H1 (cell line): ENCODE measurements at regions of chr7 and their contacts with region 1.

Region 1: DNA sequence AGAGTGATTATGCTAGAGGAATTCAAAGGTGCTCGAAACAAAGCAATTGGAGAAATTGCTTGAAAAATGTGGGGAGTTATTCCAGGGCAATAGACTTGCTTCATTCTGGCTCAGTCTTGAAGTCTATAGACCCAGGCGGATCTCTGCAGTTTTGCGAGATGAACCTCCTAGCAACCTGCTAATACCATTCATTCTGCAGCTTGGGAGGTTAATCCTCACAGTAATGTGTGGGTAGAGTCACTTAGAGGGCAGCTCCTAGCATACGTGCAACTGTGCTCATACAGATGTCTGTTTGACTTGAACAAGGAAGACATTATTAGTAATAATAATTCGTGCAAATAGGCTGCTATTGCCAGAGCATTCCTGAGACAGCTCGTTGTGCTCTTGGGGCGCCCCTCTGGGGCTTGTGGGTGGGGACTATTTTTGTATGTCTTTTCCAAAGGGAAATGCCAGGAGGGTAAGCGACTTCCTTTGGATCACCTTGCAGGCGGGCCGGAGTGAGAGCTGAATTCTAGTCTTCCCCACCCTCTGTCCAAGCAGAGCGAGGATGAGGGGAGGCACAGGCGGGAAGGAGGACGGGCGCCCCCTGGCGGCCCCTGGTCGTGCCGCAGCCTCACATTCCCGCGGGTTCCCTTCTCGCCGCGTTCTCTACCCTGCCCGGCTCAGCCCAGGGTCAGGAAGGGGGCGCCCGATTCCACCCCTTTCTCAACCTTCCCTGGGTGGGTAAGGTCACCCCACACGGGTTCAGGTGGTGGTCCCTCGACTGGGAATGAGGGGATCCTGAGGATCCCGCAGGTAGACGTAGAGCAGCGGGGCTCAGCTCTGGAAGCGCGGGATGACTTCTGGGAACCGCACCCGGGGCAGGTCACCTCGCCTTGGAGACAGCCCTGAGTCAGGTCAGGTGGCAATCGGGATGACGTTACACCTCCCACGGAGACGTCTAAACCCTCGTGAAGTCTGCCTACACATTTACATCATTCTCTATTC is 241.5 kb downstream of the PHTF2 start:
- DNase-seq: peak; percentile 51 to 95
- H3K4me3 ChIP-seq: no peak overlapping the region
- H3K27ac ChIP-seq: no peak overlapping the region
- H3K4me1 ChIP-seq: peaks cover 3 to 20% (median 13%) of the 10 kb centered on the region in 4 experiments; a peak in 5 of 7 replicates
- H3K27me3 ChIP-seq: no peaks in the 10 kb centered on the region
- CTCF ChIP-seq: peak; percentile 82 to 95 (median 95)
- EP300 ChIP-seq: no peak
- POLR2A ChIP-seq: no peak
- RAD21 ChIP-seq: peak; percentile 78 to 79

Region 2: DNA sequence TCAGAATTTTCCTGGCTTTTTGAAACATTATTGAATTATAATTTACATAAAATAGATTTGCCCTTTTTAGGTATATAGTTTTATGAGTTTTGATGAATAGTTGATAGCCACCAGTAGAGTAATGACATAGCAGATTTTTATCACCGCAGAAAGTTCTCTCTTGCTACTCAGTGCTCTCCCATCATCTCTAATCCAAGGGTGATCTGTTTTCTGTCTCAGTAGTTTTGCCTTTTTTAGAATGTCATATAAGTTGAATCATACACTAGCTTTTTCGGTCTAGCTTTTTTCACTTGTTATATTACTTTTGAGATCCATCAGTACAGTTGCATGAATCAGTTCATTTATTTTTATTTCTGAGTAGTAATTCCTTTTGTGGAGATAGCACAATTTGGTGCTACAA is 325.9 kb before region 1 on chr7:
- CTCF ChIA-PET with region 1: no interaction called
- POLR2A ChIA-PET with region 1: no interaction called
- DNase-seq: no peak
- H3K4me3 ChIP-seq: no peak overlapping the region
- H3K27ac ChIP-seq: no peak overlapping the region
- H3K4me1 ChIP-seq: no peaks in the 10 kb centered on the region
- H3K27me3 ChIP-seq: no peaks in the 10 kb centered on the region
- CTCF ChIP-seq: no peak
- EP300 ChIP-seq: no peak
- POLR2A ChIP-seq: no peak
- RAD21 ChIP-seq: no peak

Region 3: DNA sequence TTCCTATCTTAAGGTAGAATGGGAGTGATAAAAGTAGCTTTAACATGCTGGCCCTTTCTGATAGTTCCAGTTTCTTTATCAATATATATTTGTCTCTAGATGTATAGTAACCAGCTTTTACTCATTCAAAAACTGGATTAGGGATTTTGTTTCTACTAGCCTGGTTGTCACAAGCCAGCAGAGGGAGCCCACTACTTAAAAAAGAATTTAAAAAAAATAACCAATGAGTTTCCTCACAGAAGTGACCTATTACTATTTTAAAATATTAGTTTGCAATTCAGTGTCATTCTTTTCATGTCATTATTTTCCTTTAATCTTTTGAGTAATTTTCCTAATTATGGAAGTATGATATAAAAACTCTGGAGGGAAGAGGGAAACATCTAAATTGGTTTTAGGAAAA is 99.4 kb before region 1 on chr7:
- CTCF ChIA-PET with region 1: interaction called, 14 read pairs
- POLR2A ChIA-PET with region 1: no interaction called
- DNase-seq: no peak
- H3K4me3 ChIP-seq: no peak overlapping the region
- H3K27ac ChIP-seq: no peak overlapping the region
- H3K4me1 ChIP-seq: no peaks in the 10 kb centered on the region
- H3K27me3 ChIP-seq: no peaks in the 10 kb centered on the region
- CTCF ChIP-seq: peak in 1 of 3 experiments; percentile 43; a peak in 1 of 4 replicates
- EP300 ChIP-seq: no peak
- POLR2A ChIP-seq: no peak
- RAD21 ChIP-seq: peak; percentile 73 to 75

Region 4: DNA sequence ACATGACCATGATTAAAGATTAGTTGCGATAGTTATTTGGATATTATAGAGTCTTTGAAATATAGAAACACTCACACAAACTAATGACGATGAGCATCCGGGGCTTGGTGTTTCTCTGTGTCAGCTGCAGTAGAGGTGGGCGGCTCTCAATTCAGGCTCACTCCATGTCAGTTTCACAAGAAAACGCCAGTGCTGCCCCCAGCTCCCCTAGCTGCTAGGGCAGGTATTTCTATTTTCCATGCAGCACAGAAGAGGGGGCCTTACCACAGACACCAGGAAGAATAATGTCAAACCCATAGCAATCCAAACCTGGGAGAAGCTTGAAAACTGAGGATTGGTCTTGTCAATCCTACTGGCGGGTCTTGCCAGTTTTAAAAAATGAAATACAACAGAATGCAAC is 44.4 kb before region 1 on chr7:
- CTCF ChIA-PET with region 1: interaction called, 39 read pairs
- POLR2A ChIA-PET with region 1: no interaction called
- DNase-seq: no peak
- H3K4me3 ChIP-seq: no peak overlapping the region
- H3K27ac ChIP-seq: no peak overlapping the region
- H3K4me1 ChIP-seq: peaks cover 0 to 3% (median 1%) of the 10 kb centered on the region in 4 experiments; a peak in 2 of 7 replicates
- H3K27me3 ChIP-seq: no peaks in the 10 kb centered on the region
- CTCF ChIP-seq: peak; percentile 58 to 78 (median 77)
- EP300 ChIP-seq: no peak
- POLR2A ChIP-seq: no peak
- RAD21 ChIP-seq: peak; percentile 49 to 62

Region 5: DNA sequence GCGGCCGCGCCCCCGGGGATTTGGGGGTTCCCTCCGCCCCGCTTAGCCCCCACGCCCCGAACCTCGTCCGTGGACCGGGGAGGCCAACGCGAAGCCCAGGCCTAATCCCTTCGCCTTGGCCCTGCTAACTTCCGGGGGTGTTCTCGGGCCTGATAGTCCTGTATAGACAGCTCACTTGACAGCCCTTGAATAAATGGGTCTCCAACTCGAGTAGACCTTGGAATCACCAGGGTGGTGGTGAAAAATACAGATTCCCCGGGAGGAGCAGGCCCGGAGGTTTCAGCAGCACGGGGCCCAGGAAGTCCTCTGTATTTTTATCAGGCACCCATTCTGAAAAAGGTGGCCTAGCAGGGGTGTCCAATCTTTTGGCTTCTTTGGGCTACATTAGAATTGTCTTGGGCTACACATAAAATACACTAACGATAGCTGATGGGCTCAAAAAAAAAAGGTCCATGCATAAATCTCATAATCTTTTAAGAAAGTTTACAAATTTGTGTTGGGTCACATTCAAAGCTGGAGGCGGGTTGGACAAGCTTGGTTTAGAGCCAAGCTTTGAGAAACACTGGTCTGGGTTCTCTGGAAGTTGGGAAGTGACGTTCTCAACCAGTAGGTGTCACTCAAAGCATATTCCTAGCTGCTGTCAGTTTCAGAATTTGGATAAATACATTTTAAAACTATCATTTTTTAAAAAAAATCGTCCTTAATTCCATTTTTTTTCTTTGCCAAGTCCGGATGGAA is 19.8 kb before region 1 on chr7:
- CTCF ChIA-PET with region 1: interaction called, 73 read pairs
- POLR2A ChIA-PET with region 1: interaction called, 8 read pairs
- DNase-seq: peak in 1 of 2 experiments; percentile 54
- H3K4me3 ChIP-seq: peak overlapping the region in 2 of 4 experiments; percentile 51 to 74; a peak in 4 of 8 replicates
- H3K27ac ChIP-seq: no peak overlapping the region
- H3K4me1 ChIP-seq: peaks cover 0 to 11% (median 3%) of the 10 kb centered on the region in 4 experiments; a peak in 4 of 7 replicates
- H3K27me3 ChIP-seq: peaks cover 2 to 10% (median 4%) of the 10 kb centered on the region in 4 experiments; a peak in 5 of 7 replicates
- CTCF ChIP-seq: peak in 2 of 3 experiments; percentile 62 to 67; a peak in 3 of 4 replicates
- EP300 ChIP-seq: no peak
- POLR2A ChIP-seq: no peak
- RAD21 ChIP-seq: peak; percentile 80 to 82

Region 6: DNA sequence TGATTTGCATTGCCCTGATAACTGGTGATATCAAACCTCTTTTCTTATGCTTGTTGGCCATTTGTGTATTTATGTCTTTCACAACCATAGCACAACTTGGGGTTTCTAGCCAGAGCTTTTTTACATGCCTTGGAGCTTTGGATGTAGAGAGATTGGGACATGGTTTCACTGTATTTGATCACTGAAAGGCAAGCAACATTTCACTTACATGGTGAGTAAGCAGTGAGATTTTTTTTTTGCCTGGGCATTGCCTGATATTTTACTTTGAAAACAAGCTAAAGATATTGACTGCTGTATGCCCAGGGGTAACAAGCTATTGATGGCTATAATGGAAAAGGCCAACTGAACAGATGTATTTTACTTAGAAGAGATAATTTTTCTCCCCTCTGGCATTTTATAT is 17.5 kb after region 1 on chr7:
- CTCF ChIA-PET with region 1: interaction called, 41 read pairs
- POLR2A ChIA-PET with region 1: no interaction called
- DNase-seq: no peak
- H3K4me3 ChIP-seq: no peak overlapping the region
- H3K27ac ChIP-seq: no peak overlapping the region
- H3K4me1 ChIP-seq: peaks cover 0 to 4% (median 1%) of the 10 kb centered on the region in 4 experiments; a peak in 3 of 7 replicates
- H3K27me3 ChIP-seq: no peaks in the 10 kb centered on the region
- CTCF ChIP-seq: no peak
- EP300 ChIP-seq: no peak
- POLR2A ChIP-seq: no peak
- RAD21 ChIP-seq: no peak

Region 7: GRCh38 chr7:78090616-78091015 is 50.5 kb after region 1 on chr7:
- CTCF ChIA-PET with region 1: interaction called, 10 read pairs
- POLR2A ChIA-PET with region 1: no interaction called
- DNase-seq: no peak
- H3K4me3 ChIP-seq: no peak overlapping the region
- H3K27ac ChIP-seq: no peak overlapping the region
- H3K4me1 ChIP-seq: no peaks in the 10 kb centered on the region
- H3K27me3 ChIP-seq: no peaks in the 10 kb centered on the region
- CTCF ChIP-seq: peak in 1 of 3 experiments; percentile 39; a peak in 2 of 4 replicates
- EP300 ChIP-seq: no peak
- POLR2A ChIP-seq: no peak
- RAD21 ChIP-seq: peak; percentile 47 to 58